Head of caudate nucleus (tissue), 42 donors: ENCODE measurements at regions of chr9 and their contacts with region 1.

Region 1: DNA sequence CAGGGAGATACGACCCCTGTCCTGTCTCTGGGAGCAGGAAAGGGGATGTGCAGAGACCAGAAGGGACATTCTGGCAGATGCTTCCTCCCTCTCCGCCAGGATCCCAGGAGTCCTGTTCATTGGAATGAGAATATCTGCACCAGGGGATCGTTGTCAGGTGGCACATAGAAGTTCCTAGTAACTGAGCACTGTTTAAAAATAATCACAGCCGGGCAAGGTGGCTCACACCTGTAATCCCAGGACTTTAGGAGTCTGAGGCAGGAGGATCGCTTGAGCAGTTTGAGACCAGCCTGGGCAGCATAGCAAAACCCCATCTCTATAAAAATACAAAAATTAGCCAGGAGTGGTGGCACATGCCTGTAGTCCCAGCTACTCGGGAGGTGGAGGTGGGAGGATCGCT is 12.3 kb downstream of the SARDH start:
- DNase-seq: peak in 9 of 42 donors; percentile 1 to 19 (median 4)

Region 2: DNA sequence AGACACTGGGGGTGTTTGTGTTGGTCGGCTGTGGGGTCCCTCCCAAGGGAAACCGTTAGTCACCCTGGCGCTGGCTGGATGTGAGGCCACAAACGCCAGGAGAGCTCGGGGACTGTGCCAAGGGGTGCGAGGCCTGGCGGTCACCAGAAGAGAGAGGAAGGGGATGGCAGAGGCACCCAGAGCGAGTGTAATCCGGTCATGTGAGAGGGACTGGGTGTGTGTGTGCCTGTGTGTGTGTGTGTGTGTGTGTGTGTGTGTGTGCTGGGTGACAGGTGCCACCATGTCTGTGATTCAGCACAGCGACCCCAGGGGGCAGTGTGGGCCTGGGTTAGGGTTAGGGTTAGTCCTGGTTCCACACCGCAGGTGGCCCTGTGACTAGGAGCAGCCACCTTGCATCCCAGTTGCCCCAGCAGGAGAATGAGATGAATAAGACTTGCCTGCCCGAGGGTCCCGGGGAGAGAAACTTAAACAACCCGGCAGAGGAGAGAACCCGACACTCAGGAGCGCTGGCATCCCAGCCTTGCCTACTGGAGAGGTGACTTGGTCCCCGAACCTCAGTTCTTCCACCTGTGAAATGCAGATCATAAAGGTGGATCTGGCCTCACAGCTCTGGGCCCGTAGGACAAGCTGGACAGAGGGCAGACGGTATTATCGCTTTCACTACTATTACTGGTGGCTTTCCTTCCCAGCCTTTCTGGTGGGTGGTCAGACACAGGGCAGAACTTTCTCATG is 192.8 kb before region 1 on chr9:
- intact Hi-C with region 1: loop called (anchors 2 kb)
- DNase-seq: peak; percentile 60 to 88 (median 78)

Region 3: GRCh38 chr9:133742849-133743444 is 17.1 kb after region 1 on chr9:
- intact Hi-C with region 1: no loop called
- DNase-seq: peak in 41 of 42 donors; percentile 72 to 93 (median 84)

Region 4: GRCh38 chr9:133916159-133916541 is 190.3 kb after region 1 on chr9:
- intact Hi-C with region 1: no loop called
- DNase-seq: peak; percentile 46 to 93 (median 82)